ENCODE measurements at regions of chr2 and their contacts with region 1.

Region 1: GRCh38 chr2:183078465-183079138 is at the start of gene DUSP19:
- DNase-seq: peak; percentile 71 to 79
- ATAC-seq: peak; percentile 94 to 98 (median 96)
- H3K4me3 ChIP-seq: peak within 1 kb of the TSS; percentile 70
- H3K27ac ChIP-seq: peak within 1 kb of the TSS; percentile 80
- H3K4me1 ChIP-seq: peaks cover 7% of the 10 kb centered on the region
- H3K27me3 ChIP-seq: no peaks in the 10 kb centered on the region
- CTCF ChIP-seq: no peak
- total RNA-seq, gene DUSP19: 1.2 to 3.9 (median 2.3) TPM

Region 2: GRCh38 chr2:182422864-182423263 is 655.7 kb before region 1 on chr2:
- intact Hi-C with region 1: no loop called
- DNase-seq: no peak
- ATAC-seq: no peak
- H3K4me3 ChIP-seq: peak overlapping the region; percentile 55
- H3K27ac ChIP-seq: no peak overlapping the region
- H3K4me1 ChIP-seq: no peaks in the 10 kb centered on the region
- H3K27me3 ChIP-seq: no peaks in the 10 kb centered on the region
- CTCF ChIP-seq: no peak

Region 3: DNA sequence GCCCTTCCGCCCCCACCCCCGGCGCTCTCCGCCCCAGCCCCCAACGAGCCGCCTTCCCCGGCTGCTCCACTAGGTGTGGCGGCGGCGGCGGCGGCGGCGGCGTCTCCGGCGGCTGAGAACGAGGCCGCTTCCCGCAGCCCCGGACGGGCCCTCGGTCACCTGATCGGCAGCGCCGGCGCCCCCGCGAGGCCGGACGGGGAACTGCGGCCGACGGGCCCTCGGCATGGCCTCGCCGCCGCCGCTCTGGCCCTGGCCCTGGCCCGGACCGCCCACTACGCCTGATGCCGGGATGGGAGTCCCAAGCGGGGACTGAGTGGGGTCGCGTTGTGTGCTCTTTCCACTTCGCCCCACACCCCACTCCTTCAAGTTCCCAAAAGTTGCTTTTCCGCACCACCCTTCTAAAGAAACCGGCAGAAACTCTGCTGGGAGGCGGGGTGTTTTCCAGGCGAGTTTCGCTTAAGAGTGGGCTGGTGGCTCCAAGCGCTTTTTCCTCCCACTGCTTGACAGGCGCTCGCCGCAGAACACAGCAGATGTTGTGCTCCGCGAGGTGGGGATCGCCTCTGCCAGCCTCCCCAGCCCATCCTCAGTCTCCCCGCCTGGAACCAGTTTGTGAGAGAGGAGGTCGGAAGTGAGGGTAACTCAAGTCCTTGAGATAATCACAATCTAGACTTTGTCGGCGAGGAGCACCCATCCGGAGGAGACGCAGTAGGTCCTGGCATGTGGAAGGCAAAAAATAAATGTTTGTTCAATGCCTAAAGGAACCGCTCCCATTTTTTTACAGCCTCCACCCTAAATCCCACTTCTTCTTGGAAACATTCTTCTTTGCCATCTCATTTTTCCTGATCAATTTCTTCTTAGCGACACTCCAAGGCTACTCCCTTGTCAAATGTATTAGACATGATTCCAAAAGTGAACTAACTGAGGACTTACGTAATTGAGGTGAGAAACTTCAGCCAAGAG is 40.0 kb before region 1 on chr2 and contains the start of gene NCKAP1:
- intact Hi-C with region 1: loop called in 1 of 2 experiments (anchors 5 kb)
- DNase-seq: peak; percentile 93 to 96
- ATAC-seq: peak; percentile 91 to 93 (median 92)
- H3K4me3 ChIP-seq: peak within 1 kb of the TSS; percentile 85
- H3K27ac ChIP-seq: peak within 1 kb of the TSS; percentile 99
- H3K4me1 ChIP-seq: peaks cover 33% of the 10 kb centered on the region
- H3K27me3 ChIP-seq: no peaks in the 10 kb centered on the region
- CTCF ChIP-seq: peak; percentile 94
- total RNA-seq, gene NCKAP1: 94.1 to 196 (median 133) TPM

Region 4: DNA sequence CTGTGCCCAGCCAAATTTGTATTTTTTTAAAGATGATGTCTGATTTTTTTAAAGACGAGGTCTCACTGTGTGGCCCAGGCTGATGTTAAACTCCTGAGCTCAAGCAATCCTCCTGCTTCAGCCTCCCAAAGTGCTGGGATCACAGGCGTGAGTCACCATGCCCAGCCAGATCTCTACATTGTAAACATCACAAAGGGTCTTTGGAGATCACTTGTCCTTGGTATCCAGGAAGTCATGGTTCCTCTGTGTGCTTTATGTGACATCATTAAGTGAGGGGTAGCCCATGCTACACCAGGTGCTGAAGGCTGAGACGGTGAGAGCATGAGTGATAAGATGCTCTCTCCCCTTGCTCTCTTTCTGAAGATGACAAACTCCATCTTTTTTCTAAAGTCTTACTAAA is 38.6 kb after region 1 on chr2:
- intact Hi-C with region 1: loop called (anchors 5 kb)
- DNase-seq: no peak
- ATAC-seq: no peak
- H3K4me3 ChIP-seq: no peak overlapping the region
- H3K27ac ChIP-seq: no peak overlapping the region
- H3K4me1 ChIP-seq: no peaks in the 10 kb centered on the region
- H3K27me3 ChIP-seq: no peaks in the 10 kb centered on the region
- CTCF ChIP-seq: no peak

Region 5: DNA sequence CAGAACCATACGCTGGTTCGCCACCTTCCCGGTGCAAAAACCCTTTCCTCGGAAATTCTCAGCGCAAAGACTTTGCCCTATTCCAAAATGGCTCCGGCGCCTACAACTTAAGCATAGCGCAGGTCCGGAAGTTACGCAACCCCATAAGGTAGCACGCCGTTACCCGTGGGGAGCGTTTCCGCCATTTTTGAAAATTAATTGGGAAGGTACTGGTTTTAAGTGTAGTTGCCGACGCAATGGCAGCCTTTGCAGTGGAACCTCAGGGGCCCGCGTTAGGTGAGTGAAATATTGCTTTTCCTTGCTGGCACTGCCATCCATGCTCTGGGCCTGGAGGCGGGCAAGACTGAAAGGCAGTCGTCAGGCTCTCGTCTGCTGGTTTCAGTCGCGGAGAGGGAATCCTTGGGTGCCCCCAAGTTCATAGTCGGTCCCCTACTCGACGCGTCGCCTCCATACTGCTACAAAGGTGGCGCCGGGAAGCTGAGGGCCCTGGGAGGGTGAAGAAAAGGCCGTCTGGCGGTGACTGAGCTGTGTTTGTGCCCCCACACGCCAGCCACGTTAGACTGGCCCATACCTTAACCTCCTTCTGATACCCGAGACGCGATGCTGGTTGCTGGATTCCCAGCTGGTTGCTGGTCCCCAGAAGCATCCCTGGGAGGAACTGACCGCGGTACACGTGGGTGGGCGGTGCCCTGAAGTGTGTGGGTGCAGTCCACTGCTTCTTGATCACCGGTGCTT is 45.8 kb after region 1 on chr2 and contains the start of gene NUP35:
- intact Hi-C with region 1: loop called (anchors 5 kb)
- DNase-seq: peak; percentile 76 to 86
- ATAC-seq: peak; percentile 95 to 99 (median 98)
- H3K4me3 ChIP-seq: peak within 1 kb of the TSS; percentile 93
- H3K27ac ChIP-seq: peak within 1 kb of the TSS; percentile 87
- H3K4me1 ChIP-seq: peaks cover 13% of the 10 kb centered on the region
- H3K27me3 ChIP-seq: no peaks in the 10 kb centered on the region
- CTCF ChIP-seq: no peak
- total RNA-seq, gene NUP35: 5.1 to 9.0 (median 6.9) TPM